Caco-2 (cell line): ENCODE measurements at regions of chr7 and their contacts with region 1.

Region 1: DNA sequence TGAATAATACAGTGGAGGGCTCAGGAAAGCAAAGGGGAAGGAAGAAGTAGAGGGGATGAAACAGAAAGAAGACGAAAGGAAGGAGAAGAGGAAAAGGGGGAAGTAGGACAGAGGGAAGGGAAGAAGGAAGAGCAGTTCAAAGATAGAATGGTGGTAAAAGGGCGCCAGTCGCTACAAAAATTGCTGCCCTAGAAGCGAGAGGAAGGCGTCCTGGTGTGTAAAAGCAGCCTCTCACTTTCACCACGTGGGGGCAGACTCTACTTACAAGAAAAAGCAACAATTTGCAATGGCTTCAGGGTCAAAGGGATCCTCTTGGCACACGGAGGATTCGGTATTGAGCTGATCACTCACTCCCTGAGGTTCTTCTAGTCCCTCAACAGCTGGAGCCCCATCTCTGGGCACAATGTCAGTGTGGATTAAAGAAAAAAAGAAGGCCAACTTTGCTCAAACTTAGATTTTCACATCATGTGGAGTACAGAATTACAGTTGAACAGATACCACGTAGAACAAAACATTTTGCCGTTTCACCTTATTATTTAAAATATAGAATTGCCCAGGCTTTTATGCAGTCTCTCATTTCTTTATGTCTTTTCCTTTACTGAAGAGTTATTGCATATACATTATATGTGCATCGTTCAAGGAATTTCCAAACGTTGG is 31.4 kb upstream of the NPVF start:
- DNase-seq: peak; percentile 69 to 72
- H3K4me3 ChIP-seq: no peak overlapping the region
- H3K4me3 Mint-ChIP-seq: no peak overlapping the region
- H3K27ac Mint-ChIP-seq: no peak overlapping the region
- H3K4me1 ChIP-seq: no peaks in the 10 kb centered on the region
- H3K4me1 Mint-ChIP-seq: no peaks in the 10 kb centered on the region
- H3K27me3 ChIP-seq: no peaks in the 10 kb centered on the region; the same call in 1 of the 2 replicates
- H3K27me3 Mint-ChIP-seq: peaks cover 19% of the 10 kb centered on the region
- CTCF ChIP-seq: peak; percentile 81 to 85

Region 2: DNA sequence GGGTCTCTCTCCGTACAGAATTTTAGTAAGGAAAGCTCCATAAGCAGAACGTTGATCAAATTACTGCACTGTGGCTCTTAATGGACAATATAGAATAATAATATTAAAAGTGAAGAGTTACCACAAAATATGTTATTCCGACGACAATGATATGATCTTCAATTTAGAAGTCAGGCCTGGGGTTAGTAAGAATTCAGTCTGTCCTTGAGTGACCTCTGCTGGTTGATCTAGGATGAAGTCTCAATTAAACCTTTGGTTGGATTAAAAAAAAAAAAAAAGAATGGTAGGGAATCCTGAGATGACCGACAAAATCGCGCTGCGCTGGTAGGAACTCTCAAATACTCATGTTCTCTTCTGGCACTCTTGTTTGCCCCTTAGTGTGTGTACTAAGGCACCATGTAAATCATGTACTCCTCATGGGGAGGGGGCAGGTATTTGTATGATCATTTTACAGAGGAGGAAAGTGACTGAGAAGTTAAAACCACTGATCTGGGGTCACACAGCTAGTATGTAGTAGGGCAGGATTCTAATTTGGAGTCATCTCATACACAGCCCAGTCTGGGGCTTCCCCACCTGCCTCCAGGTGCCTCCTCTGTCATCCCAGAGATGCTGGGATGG is 129.9 kb after region 1 on chr7:
- CTCF ChIA-PET with region 1: interaction called, 7 read pairs
- POLR2A ChIA-PET with region 1: no interaction called
- intact Hi-C with region 1: loop called (anchors 1 kb)
- DNase-seq: peak in 1 of 2 experiments; percentile 32
- H3K4me3 ChIP-seq: no peak overlapping the region
- H3K4me3 Mint-ChIP-seq: no peak overlapping the region
- H3K27ac Mint-ChIP-seq: no peak overlapping the region
- H3K4me1 ChIP-seq: no peaks in the 10 kb centered on the region
- H3K4me1 Mint-ChIP-seq: no peaks in the 10 kb centered on the region
- H3K27me3 ChIP-seq: no peaks in the 10 kb centered on the region
- H3K27me3 Mint-ChIP-seq: peaks cover 13% of the 10 kb centered on the region
- CTCF ChIP-seq: peak; percentile 35 to 45

Region 3: DNA sequence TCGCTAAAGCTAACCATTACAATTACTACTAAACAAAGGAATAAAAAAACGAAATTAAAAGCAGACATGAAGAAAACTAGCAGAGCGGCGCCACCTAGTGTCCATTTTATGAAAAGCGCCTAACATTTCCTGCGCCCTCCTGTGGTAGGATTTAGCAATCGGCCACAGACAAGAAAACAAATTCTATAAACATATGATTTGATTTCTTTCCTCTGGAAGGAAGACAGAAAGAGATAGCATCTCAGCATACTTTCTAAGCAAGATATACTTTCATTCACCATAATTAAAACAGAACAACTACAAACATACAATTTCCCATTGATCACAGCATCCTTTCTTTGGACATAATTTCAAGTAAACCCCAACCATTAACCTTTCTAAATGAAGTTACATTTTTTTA is 306.2 kb after region 1 on chr7:
- CTCF ChIA-PET with region 1: interaction called, 5 read pairs
- POLR2A ChIA-PET with region 1: no interaction called
- intact Hi-C with region 1: loop called (anchors 1 kb)
- DNase-seq: peak in 1 of 2 experiments; percentile 59
- H3K4me3 ChIP-seq: no peak overlapping the region
- H3K4me3 Mint-ChIP-seq: no peak overlapping the region
- H3K27ac Mint-ChIP-seq: no peak overlapping the region
- H3K4me1 ChIP-seq: no peaks in the 10 kb centered on the region
- H3K4me1 Mint-ChIP-seq: peaks cover 6% of the 10 kb centered on the region
- H3K27me3 ChIP-seq: no peaks in the 10 kb centered on the region
- H3K27me3 Mint-ChIP-seq: peaks cover 13% of the 10 kb centered on the region
- CTCF ChIP-seq: peak; percentile 100